Activated CD4-positive, alpha-beta T cell treated with anti-CD3 and anti-CD28 coated beads, Interleukin-2, amount 10 ng/mL, durations not matched to agents 24 days and 14 days (primary cell): ENCODE measurements at regions of chr19 and their contacts with region 1.

Region 1: GRCh38 chr19:56066152-56067023 is 54.7 kb downstream of the ZNF787 start:
- DNase-seq: peak; percentile 90
- H3K4me3 Mint-ChIP-seq: peak overlapping the region; percentile 75
- H3K27ac Mint-ChIP-seq: no peak overlapping the region
- H3K4me1 Mint-ChIP-seq: peaks cover 10% of the 10 kb centered on the region
- H3K27me3 Mint-ChIP-seq: peaks cover 6% of the 10 kb centered on the region

Region 2: DNA sequence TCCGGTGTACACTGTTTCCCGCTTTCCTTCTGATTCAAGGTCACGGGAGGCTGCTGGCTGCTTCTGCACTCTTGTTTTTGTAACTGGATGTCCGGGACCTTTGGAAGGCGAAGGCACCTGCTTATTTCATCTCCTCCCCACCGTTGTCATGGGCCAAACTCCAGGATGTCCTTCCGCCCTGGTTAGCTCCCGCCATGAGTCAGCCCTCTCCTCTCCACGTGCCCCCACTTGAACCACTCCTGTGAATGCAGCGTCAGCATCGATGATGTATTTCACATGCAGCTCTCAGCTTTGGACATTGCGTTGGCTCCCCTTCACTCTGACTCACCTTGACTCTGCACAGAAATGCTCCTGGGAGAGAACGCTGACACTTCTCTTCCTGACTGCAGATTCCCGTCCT is 103.9 kb after region 1 on chr19:
- intact Hi-C with region 1: loop called (anchors 1 kb)
- DNase-seq: no peak
- H3K4me3 Mint-ChIP-seq: no peak overlapping the region
- H3K27ac Mint-ChIP-seq: no peak overlapping the region
- H3K4me1 Mint-ChIP-seq: peaks cover 3% of the 10 kb centered on the region
- H3K27me3 Mint-ChIP-seq: no peaks in the 10 kb centered on the region

Region 3: DNA sequence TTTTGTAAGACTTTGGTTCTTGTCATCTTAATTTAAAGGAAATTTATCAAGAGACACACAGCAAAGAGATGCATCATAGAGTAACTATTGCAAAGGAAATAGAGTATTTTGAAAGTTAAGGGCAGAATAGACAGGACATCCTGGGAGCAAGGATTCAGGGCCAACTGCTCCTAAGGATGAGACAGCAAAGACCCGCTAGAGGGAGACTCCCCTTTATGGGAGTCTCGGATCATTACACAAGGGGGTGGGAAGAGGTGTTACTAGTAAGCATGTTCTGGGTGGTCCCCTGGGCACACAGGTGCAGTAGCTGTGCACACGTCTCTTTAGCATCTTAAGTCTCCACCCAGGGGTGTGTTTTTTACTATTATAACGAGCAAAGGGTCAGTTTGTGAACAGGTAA is 145.3 kb after region 1 on chr19:
- intact Hi-C with region 1: no loop called
- DNase-seq: no peak
- H3K4me3 Mint-ChIP-seq: no peak overlapping the region
- H3K27ac Mint-ChIP-seq: no peak overlapping the region
- H3K4me1 Mint-ChIP-seq: no peaks in the 10 kb centered on the region
- H3K27me3 Mint-ChIP-seq: peaks cover under 1% of the 10 kb centered on the region

Region 4: GRCh38 chr19:56222901-56223300 is 156.5 kb after region 1 on chr19:
- intact Hi-C with region 1: no loop called
- DNase-seq: no peak
- H3K4me3 Mint-ChIP-seq: no peak overlapping the region
- H3K27ac Mint-ChIP-seq: no peak overlapping the region
- H3K4me1 Mint-ChIP-seq: peaks cover 4% of the 10 kb centered on the region
- H3K27me3 Mint-ChIP-seq: peaks cover 3% of the 10 kb centered on the region

Region 5: GRCh38 chr19:56333505-56333904 is 267.1 kb after region 1 on chr19:
- intact Hi-C with region 1: loop called (anchors 1 kb)
- DNase-seq: peak; percentile 86
- H3K4me3 Mint-ChIP-seq: no peak overlapping the region
- H3K27ac Mint-ChIP-seq: no peak overlapping the region
- H3K4me1 Mint-ChIP-seq: no peaks in the 10 kb centered on the region
- H3K27me3 Mint-ChIP-seq: no peaks in the 10 kb centered on the region